Naive thymus-derived CD4-positive, alpha-beta T cell (primary cell): ENCODE measurements at regions of chr7 and their contacts with region 1.

Region 1: DNA sequence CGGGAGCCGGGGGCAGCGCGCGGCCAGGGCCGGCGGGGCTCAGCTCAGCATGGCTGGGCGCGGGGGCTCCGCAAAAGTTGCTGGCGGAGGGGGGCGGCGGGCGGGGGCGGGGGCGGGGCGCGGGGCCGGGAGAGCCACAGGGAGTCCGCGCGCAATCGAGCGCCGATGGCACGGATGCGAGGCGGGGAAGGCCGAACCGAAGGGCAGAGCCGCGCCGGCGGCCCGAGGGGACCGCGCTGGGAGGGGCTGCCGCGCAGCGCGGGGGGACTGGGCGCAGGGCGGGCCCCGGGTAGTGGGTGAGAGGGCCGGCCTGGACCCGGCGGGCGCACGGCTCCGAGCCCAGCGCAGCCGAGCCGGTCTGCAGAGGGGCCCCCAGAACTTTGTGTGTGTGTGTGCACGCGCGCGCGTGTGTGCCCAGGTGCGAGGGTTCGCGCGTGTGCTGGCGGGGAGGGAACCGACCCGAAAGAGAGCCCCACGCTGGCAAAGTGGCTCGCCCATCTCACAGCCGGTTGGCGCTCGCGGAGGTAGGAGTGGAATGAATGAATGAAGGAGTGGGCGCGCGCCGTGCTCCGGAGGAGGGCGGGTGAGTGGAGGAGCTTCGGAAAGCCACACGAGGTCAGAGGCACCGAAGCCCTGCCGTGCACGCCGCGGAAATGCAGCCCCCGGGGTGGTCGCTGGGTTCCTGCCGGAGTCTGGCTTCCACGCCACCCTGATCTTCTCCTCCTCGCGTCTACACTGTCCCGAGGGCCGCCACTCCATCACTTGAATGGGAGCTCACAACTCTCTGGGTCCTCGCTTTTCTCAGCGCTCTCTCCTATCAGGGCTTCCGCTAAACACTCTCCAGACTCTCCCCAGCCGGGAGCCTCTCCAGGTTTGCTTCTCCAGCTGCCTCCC is at the start of gene HIPK2:
- DNase-seq: peak; percentile 54 to 75 (median 67)
- ATAC-seq: peak; percentile 79
- H3K4me3 ChIP-seq: peak within 1 kb of the TSS; percentile 85
- H3K4me3 Mint-ChIP-seq: peak within 1 kb of the TSS; percentile 94 to 100 (median 98)
- H3K27ac ChIP-seq: peak within 1 kb of the TSS; percentile 89
- H3K27ac Mint-ChIP-seq: peak within 1 kb of the TSS; percentile 95 to 98 (median 97)
- H3K4me1 ChIP-seq: peaks cover 4 to 26% of the 10 kb centered on the region in 2 donors
- H3K4me1 Mint-ChIP-seq: peaks cover 41 to 53% (median 49%) of the 10 kb centered on the region in 7 donors
- H3K27me3 ChIP-seq: no peaks in the 10 kb centered on the region
- H3K27me3 Mint-ChIP-seq: peaks cover 0 to 24% (median 5%) of the 10 kb centered on the region in 5 donors
- total RNA-seq, gene HIPK2: 27.3 to 44.0 (median 37.3) TPM

Region 2: GRCh38 chr7:139731802-139732470 is 46.3 kb before region 1 on chr7:
- CTCF ChIA-PET with region 1: interaction called, 3 read pairs
- POLR2A ChIA-PET with region 1: interaction called, 5 read pairs
- intact Hi-C with region 1: loop called (anchors 2 to 5 kb)
- DNase-seq: no peak
- ATAC-seq: peak; percentile 60
- H3K4me3 ChIP-seq: no peak overlapping the region
- H3K4me3 Mint-ChIP-seq: peak overlapping the region; percentile 20 to 70 (median 60)
- H3K27ac ChIP-seq: no peak overlapping the region
- H3K27ac Mint-ChIP-seq: peak overlapping the region; percentile 46 to 93 (median 79)
- H3K4me1 ChIP-seq: peaks cover 0 to 29% of the 10 kb centered on the region in 2 donors
- H3K4me1 Mint-ChIP-seq: peaks cover 38 to 87% (median 81%) of the 10 kb centered on the region in 7 donors
- H3K27me3 ChIP-seq: no peaks in the 10 kb centered on the region
- H3K27me3 Mint-ChIP-seq: no peaks in the 10 kb centered on the region

Region 3: GRCh38 chr7:139767561-139767982 is 10.6 kb before region 1 on chr7:
- CTCF ChIA-PET with region 1: interaction called, 4 read pairs
- POLR2A ChIA-PET with region 1: interaction called, 36 read pairs
- intact Hi-C with region 1: loop called (anchors 1 kb)
- DNase-seq: peak in 7 of 9 donors; percentile 30 to 77 (median 66)
- ATAC-seq: peak; percentile 76
- H3K4me3 ChIP-seq: peak overlapping the region; percentile 48
- H3K4me3 Mint-ChIP-seq: peak overlapping the region; percentile 43 to 88 (median 69)
- H3K27ac ChIP-seq: peak overlapping the region; percentile 66
- H3K27ac Mint-ChIP-seq: peak overlapping the region; percentile 80 to 97 (median 91)
- H3K4me1 ChIP-seq: peaks cover 33 to 60% of the 10 kb centered on the region in 2 donors
- H3K4me1 Mint-ChIP-seq: peaks cover 58 to 98% (median 90%) of the 10 kb centered on the region in 7 donors
- H3K27me3 ChIP-seq: no peaks in the 10 kb centered on the region
- H3K27me3 Mint-ChIP-seq: no peaks in the 10 kb centered on the region

Region 4: DNA sequence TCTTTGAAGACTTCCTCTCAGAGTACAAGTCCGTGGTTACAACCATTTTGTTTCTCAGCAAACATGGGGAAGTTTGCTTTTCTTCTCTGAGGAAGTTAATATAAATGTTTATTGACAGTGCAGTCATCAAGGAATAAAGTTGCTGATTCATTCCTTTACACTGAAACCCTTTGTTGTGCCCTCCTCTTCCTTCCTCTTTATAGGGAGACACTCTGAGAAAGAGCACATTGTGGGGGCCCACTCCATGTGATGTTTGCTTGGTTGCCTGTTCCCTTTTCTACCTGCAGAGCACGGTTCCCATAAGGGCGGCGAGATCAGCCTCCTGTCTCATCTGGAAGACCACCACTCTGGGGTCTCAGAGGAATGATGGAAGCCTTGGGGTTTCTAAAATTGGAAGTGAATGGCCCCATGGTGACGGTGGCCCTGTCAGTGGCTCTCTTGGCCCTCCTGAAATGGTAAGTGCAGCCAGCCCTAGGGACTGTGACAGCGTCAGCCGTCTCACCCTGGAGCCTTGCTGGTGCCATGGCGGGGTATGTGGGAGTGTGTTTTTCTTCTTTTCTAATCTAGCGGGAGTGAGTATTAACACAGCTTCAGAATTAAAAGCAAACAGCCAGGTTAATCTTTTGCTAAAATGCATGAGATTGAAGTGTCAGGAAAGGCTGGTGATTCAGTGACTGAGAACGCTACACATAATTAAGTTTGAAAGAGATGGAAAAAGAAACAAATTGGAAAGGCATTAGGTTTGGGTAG is 51.0 kb after region 1 on chr7 and contains the start of gene TBXAS1:
- CTCF ChIA-PET with region 1: no interaction called
- POLR2A ChIA-PET with region 1: no interaction called
- intact Hi-C with region 1: no loop called
- DNase-seq: peak in 3 of 9 donors; percentile 6 to 14 (median 12)
- ATAC-seq: peak; percentile 87
- H3K4me3 ChIP-seq: no peak within 1 kb of the TSS
- H3K4me3 Mint-ChIP-seq: peak within 1 kb of the TSS; percentile 19 to 78 (median 68)
- H3K27ac ChIP-seq: no peak within 1 kb of the TSS
- H3K27ac Mint-ChIP-seq: peak within 1 kb of the TSS in 8 of 9 donors; percentile 67 to 90 (median 83)
- H3K4me1 ChIP-seq: peaks cover 0 to 8% of the 10 kb centered on the region in 2 donors
- H3K4me1 Mint-ChIP-seq: peaks cover 10 to 30% (median 26%) of the 10 kb centered on the region in 7 donors
- H3K27me3 ChIP-seq: no peaks in the 10 kb centered on the region
- H3K27me3 Mint-ChIP-seq: peaks cover 0 to 16% (median 5%) of the 10 kb centered on the region in 5 donors
- total RNA-seq, gene TBXAS1: 2.6 to 70.9 (median 6.7) TPM

Region 5: DNA sequence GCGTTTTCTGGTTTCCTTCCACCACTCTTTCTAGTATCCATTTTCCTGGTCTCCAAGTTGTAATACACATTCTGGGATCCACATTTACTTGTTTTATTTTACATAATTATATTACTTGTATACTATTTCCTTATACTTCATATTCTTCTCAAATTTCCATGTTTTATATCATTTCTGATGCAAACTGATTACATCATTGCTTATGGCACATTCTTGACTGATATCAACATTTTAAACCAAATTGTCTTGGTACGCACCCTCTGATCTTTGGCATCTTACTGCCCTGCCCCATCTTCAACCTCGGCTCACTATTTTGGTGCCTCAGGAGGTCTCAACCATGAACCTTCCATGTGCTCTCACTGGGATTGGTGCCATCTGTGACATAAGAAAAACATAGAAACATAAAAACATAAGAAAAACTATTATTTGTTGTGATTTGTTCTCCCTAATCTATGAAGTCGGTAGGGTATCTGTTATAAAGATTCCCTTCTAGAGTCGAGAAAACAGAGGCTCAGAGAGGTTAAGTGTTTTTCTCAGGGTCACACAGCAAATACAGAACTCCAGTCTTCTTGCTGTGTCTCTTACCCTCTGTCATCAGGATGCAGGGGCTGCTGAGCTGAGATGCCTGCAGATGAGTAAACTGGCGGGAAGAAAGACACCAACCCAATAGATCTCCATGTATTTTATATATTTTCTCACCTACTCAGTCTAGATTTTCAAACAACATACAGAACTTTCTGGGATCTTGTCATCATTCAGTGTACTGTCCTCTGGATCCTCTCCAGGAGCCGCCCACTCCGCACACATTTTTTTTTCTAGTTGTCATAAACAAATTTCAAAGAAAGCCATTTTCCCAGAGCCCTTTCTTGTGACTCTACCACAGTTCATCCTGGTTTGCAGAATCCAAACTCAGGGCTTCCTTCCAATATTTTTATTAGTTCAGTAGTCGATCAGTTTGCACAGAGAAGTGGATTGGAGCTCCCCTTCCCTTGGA is 205.0 kb after region 1 on chr7:
- CTCF ChIA-PET with region 1: no interaction called
- POLR2A ChIA-PET with region 1: no interaction called
- intact Hi-C with region 1: loop called in 1 of 2 experiments (anchors 2 kb)
- DNase-seq: no peak
- ATAC-seq: no peak
- H3K4me3 ChIP-seq: no peak overlapping the region
- H3K4me3 Mint-ChIP-seq: no peak overlapping the region
- H3K27ac ChIP-seq: no peak overlapping the region
- H3K27ac Mint-ChIP-seq: no peak overlapping the region
- H3K4me1 ChIP-seq: peaks cover 9 to 10% of the 10 kb centered on the region in 2 donors
- H3K4me1 Mint-ChIP-seq: peaks cover 8 to 19% (median 17%) of the 10 kb centered on the region in 7 donors
- H3K27me3 ChIP-seq: no peaks in the 10 kb centered on the region
- H3K27me3 Mint-ChIP-seq: peaks cover 0 to 22% (median 0%) of the 10 kb centered on the region in 5 donors

Region 6: DNA sequence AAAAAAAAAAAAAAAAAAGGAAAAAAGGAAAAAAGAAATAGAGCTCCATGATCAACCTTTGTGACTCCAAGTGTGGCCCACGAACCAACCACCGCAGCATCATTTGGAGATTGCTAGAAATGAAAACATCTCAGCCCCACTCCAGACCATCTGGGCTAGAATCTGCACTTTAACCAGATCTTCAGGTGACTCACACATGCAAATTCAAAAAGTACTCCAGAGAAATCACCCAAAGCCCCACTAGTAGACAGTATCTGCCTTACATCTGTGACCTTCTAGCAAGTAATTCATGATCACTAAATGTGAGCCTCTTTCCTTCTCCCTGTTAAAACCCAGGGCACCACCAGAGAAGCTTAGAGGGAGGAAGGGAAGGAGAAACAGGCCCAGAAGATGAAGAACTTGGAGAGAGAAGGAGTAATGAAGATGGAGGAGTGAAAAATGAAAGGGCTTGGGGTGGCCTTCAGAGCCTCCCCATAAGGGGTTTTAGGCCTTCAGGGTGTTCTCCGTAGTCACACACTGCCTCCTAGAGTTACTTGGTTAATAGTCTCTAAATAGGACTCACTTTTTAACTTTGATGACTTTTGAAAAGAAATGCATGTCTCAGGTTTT is 526.1 kb after region 1 on chr7:
- CTCF ChIA-PET with region 1: no interaction called
- POLR2A ChIA-PET with region 1: no interaction called
- intact Hi-C with region 1: loop called (anchors 1 to 10 kb)
- DNase-seq: peak in 8 of 9 donors; percentile 30 to 75 (median 58)
- ATAC-seq: peak; percentile 93
- H3K4me3 ChIP-seq: no peak overlapping the region
- H3K4me3 Mint-ChIP-seq: peak overlapping the region in 1 of 10 donors; percentile 12
- H3K27ac ChIP-seq: no peak overlapping the region
- H3K27ac Mint-ChIP-seq: peak overlapping the region; percentile 3 to 81 (median 62)
- H3K4me1 ChIP-seq: no peaks in the 10 kb centered on the region
- H3K4me1 Mint-ChIP-seq: peaks cover 0 to 7% (median 6%) of the 10 kb centered on the region in 7 donors
- H3K27me3 ChIP-seq: no peaks in the 10 kb centered on the region
- H3K27me3 Mint-ChIP-seq: no peaks in the 10 kb centered on the region